Activated CD4-positive, alpha-beta T cell treated with anti-CD3 and anti-CD28 coated beads for 36 hours (primary cell): ENCODE measurements at regions of chr2 and their contacts with region 1.

Region 1: DNA sequence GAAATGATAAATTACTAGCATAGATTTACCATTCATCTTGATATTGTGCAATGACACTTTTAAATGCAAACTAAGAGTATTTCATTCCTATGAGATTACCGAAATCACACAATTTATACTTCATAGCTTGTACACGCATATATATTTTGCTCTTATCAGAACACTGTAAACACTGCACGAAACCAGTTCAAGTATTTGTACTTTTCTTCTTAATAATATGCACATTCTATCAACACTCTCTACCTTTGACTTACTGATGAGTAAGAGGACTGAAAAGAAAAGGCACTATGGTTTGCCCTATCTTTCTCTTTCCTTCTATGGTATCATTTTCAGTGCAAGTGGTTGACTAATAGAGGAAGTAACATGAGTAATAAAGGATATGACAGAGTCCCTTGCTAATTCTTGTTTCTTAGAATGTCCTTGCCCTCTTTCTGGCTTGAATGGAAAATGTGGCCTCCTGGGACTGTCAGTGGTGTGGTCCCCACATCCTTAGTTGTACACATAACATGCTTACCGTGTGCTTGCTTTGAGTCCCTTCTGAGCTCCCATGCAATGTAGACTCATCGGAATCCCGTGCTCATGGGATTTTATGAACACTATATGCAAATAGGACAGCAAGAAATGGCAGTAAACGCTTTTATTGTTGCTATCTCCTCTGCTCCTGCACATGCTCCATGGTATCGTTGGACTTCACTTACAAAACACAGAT is 363.5 kb upstream of the TNP1 start:
- DNase-seq: peak; percentile 82
- ATAC-seq: peak; percentile 92
- H3K4me3 Mint-ChIP-seq: peak overlapping the region; percentile 44
- H3K27ac Mint-ChIP-seq: peak overlapping the region; percentile 86
- H3K4me1 Mint-ChIP-seq: peaks cover 31% of the 10 kb centered on the region
- H3K27me3 Mint-ChIP-seq: peaks cover 10% of the 10 kb centered on the region

Region 2: GRCh38 chr2:216081487-216082116 is 1141.8 kb before region 1 on chr2 and contains the starts of genes PECR and TMEM169:
- CTCF ChIA-PET with region 1: no interaction called
- POLR2A ChIA-PET with region 1: no interaction called
- intact Hi-C with region 1: no loop called
- DNase-seq: peak; percentile 89
- ATAC-seq: peak; percentile 93
- H3K4me3 Mint-ChIP-seq: peak within 1 kb of the TSS; percentile 81
- H3K27ac Mint-ChIP-seq: peak within 1 kb of the TSS; percentile 81
- H3K4me1 Mint-ChIP-seq: peaks cover 59% of the 10 kb centered on the region
- H3K27me3 Mint-ChIP-seq: no peaks in the 10 kb centered on the region
- total RNA-seq, gene PECR: 17.0 to 20.8 TPM
- total RNA-seq, gene TMEM169: 1.6 to 1.8 TPM

Region 3: DNA sequence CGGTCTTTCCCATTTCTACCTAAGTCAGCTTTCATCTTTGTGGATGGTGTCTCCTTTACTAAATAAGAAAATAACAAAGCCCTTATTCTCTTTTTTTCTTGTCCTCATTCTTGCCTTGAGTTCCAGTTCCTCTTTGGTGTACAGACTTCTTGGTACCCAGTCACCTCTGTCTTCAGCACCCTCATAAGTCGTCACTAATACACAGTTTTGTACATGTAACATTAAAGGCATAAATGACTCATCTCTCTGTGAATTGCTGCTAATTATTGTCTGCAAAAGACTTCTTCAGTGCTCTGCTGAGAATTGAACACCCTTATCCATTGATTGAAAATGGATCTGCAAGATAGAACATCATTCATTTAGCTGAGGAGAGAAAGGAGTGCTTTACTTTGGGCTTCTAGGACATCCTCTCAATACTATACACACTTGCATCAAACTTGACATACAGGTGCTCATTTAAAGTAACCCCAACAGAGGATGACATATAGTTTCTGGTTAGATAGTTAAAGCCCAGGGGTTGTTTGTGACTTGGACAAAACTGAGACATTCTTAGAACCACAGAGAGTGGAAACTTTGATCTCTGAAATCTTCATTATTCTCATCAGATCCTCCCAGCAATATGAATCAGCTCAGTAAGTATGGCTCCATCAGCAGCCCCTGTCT is 1017.2 kb before region 1 on chr2:
- CTCF ChIA-PET with region 1: no interaction called
- POLR2A ChIA-PET with region 1: no interaction called
- intact Hi-C with region 1: loop called in 1 of 2 experiments (anchors 5 kb)
- DNase-seq: no peak
- ATAC-seq: peak; percentile 88
- H3K4me3 Mint-ChIP-seq: no peak overlapping the region
- H3K27ac Mint-ChIP-seq: peak overlapping the region; percentile 94
- H3K4me1 Mint-ChIP-seq: peaks cover 72% of the 10 kb centered on the region
- H3K27me3 Mint-ChIP-seq: no peaks in the 10 kb centered on the region

Region 4: DNA sequence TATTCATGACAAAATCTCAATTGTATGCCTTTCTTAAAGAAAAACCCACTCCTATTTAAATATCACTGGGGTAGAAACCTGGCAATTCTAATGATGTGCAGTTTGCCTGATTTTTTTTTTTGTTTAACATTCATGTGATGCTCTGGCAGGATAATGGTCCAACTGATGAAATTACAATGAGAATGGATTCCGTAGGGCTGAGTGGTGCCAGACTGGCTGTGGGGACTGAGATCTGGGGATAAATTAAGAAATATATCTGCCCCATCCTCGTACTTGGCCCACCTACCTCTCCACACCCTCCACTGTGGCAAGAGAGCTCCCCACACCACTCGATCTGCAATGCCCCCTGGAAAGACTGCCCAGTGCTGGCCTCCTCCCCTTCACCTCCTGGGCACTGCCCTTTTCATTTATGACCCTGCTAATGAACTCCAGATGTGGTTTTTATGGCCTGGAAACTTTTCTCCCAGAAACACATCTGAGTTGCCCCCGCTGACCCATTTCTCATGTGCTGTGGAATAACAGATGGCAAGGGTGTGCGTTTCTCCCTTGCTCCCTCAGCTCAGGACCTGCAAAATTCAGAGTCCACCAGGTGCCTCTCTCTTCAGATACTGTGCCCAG is 757.7 kb before region 1 on chr2:
- CTCF ChIA-PET with region 1: no interaction called
- POLR2A ChIA-PET with region 1: no interaction called
- intact Hi-C with region 1: no loop called
- DNase-seq: no peak
- ATAC-seq: no peak
- H3K4me3 Mint-ChIP-seq: no peak overlapping the region
- H3K27ac Mint-ChIP-seq: no peak overlapping the region
- H3K4me1 Mint-ChIP-seq: no peaks in the 10 kb centered on the region
- H3K27me3 Mint-ChIP-seq: no peaks in the 10 kb centered on the region

Region 5: DNA sequence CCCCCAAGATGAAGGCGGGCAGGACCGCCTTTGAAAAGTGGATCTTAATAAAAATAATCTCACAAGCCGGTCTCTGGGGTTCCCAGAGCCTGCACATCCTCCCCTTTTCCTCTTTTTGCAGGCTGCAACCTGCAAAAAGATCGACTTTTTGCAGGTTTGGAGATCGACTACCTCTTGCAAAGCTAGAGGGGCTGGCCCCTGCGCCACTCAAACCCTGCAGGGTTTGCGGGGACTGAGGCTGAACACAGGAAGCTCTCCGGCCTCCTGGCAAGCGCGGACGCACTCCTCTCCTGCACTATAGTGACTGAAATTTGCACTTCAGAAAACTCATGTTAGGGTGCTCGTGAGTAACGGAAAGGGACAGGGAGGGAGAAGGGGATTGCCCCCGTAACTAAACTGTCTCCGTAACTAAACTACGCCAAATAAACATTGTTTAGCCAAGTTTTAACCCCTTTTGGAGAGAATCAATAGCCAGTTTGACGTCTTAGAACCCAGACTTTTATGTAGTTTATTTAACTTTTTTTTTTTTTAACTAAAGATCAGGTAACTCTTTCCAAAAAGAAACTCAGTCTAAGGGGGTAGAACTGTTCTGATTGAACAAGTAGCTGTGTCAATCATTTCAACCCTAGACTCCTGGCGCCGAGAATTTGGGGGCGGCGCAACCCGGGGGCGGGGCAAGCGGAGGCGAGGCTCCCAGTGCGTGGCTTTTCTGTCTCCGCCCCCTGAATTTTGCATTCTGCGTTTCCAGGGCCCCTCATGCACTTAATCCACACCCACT is 530.6 kb before region 1 on chr2:
- CTCF ChIA-PET with region 1: no interaction called
- POLR2A ChIA-PET with region 1: no interaction called
- intact Hi-C with region 1: loop called (anchors 2 to 5 kb)
- DNase-seq: peak; percentile 84
- ATAC-seq: peak; percentile 59
- H3K4me3 Mint-ChIP-seq: peak overlapping the region; percentile 74
- H3K27ac Mint-ChIP-seq: peak overlapping the region; percentile 61
- H3K4me1 Mint-ChIP-seq: peaks cover 32% of the 10 kb centered on the region
- H3K27me3 Mint-ChIP-seq: peaks cover 56% of the 10 kb centered on the region

Region 6: DNA sequence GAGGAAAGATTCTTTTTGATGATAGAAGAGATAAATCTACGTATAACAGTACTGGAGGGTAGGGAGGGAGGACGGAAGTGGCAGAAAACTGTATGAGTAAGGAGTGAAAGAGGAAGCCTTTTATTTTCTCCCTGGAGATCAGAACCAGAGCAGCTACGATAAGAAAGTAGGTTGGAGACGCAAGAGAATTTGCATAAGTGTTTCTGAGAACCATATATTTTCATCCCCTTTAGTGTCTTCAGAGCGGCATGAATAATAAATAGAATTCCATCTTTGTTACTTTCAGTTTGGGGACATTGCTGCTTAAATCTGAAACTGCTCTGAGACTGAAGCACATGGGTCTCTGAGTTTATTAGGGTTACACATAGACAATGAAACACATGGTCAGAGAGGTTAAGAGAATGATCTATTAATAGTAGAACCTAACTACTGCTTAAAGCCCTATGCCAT is 133.3 kb before region 1 on chr2:
- CTCF ChIA-PET with region 1: interaction called, 4 read pairs
- POLR2A ChIA-PET with region 1: interaction called, 4 read pairs
- intact Hi-C with region 1: loop called (anchors 1 kb)
- DNase-seq: peak; percentile 44
- ATAC-seq: peak; percentile 83
- H3K4me3 Mint-ChIP-seq: no peak overlapping the region
- H3K27ac Mint-ChIP-seq: no peak overlapping the region
- H3K4me1 Mint-ChIP-seq: peaks cover 58% of the 10 kb centered on the region
- H3K27me3 Mint-ChIP-seq: peaks cover 4% of the 10 kb centered on the region

Region 7: GRCh38 chr2:217370391-217370790 is 147.0 kb after region 1 on chr2:
- CTCF ChIA-PET with region 1: no interaction called
- POLR2A ChIA-PET with region 1: no interaction called
- intact Hi-C with region 1: no loop called
- DNase-seq: peak; percentile 34
- ATAC-seq: peak; percentile 94
- H3K4me3 Mint-ChIP-seq: no peak overlapping the region
- H3K27ac Mint-ChIP-seq: no peak overlapping the region
- H3K4me1 Mint-ChIP-seq: no peaks in the 10 kb centered on the region
- H3K27me3 Mint-ChIP-seq: no peaks in the 10 kb centered on the region

Region 8: DNA sequence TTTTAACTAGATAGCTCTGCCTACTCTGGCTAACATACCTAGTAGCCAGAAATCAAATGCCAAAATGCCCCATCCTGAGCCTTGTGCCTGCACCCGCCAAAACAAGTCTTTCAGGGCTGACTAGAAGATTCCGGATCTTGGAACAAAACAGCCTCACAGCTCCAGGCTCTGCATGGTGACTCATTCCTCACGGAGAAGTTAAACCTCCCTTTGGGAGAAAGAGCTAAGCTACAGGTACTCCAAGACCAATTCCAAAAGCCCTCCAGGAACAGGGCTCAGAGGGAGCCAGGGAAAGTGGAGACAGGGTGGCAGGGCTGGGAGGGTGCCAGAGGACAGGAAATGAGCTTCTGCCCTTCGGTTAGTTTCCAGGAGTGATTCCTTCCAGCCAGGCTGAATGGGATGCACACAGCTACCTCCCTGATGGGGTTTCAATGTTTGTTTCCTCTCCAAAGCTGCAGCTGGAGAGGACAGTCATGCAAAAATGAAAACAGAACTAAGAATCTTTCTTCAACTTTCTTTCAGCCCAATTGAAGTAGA is 483.8 kb after region 1 on chr2:
- CTCF ChIA-PET with region 1: no interaction called
- POLR2A ChIA-PET with region 1: no interaction called
- intact Hi-C with region 1: no loop called
- DNase-seq: no peak
- ATAC-seq: no peak
- H3K4me3 Mint-ChIP-seq: no peak overlapping the region
- H3K27ac Mint-ChIP-seq: no peak overlapping the region
- H3K4me1 Mint-ChIP-seq: no peaks in the 10 kb centered on the region
- H3K27me3 Mint-ChIP-seq: peaks cover 2% of the 10 kb centered on the region

Region 9: DNA sequence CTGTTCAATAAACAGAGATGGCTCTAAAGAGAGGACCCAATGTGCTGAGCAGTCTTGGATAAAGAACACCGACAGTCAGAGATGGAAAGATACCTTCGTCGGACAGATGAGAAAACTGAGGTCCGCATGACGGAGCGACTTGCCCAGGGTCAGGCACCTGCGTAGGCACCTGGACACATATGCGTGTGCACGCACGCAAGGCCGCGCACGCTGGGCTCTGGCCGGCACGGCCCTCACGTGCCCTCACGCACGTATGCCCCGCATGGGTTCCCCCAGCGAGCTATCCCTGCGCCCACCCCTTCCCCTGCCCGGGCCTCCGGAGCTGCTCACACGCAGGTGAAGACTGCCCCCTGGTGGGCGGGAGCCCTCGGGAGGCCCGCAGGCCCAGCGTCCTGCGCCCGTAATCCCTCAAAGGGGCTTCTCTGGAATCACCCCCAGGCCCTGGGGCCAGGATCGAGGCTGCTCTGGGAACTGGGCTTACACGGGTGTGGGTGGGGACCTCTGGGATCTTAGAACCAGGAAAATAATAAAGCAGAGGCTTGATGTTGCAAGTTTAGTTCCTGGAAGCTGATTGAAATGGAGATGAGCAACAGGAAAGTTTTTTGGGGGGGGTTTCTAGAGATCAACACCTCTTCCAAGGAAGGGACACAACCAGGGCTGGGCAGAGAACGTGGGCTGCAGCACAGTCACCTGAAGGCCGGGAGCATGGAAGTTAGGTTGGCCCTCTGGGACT is 533.2 kb after region 1 on chr2:
- CTCF ChIA-PET with region 1: no interaction called
- POLR2A ChIA-PET with region 1: no interaction called
- intact Hi-C with region 1: loop called in 1 of 2 experiments (anchors 2 kb)
- DNase-seq: peak; percentile 89
- ATAC-seq: peak; percentile 84
- H3K4me3 Mint-ChIP-seq: peak overlapping the region; percentile 61
- H3K27ac Mint-ChIP-seq: peak overlapping the region; percentile 82
- H3K4me1 Mint-ChIP-seq: peaks cover 24% of the 10 kb centered on the region
- H3K27me3 Mint-ChIP-seq: peaks cover 4% of the 10 kb centered on the region